CD8-positive, alpha-beta T cell (primary cell): ENCODE measurements at regions of chr17 and their contacts with region 1.

Region 1: GRCh38 chr17:385926-386876 is 33.6 kb upstream of the RPH3AL start:
- DNase-seq: peak; percentile 47 to 83 (median 72)
- ATAC-seq: peak; percentile 75
- H3K4me3 ChIP-seq: no peak overlapping the region
- H3K4me3 Mint-ChIP-seq: peak overlapping the region; percentile 84
- H3K27ac ChIP-seq: no peak overlapping the region
- H3K27ac Mint-ChIP-seq: no peak overlapping the region
- H3K4me1 ChIP-seq: peaks cover 5% of the 10 kb centered on the region
- H3K4me1 Mint-ChIP-seq: peaks cover 18% of the 10 kb centered on the region
- H3K27me3 ChIP-seq: no peaks in the 10 kb centered on the region
- H3K27me3 Mint-ChIP-seq: peaks cover 16% of the 10 kb centered on the region
- CTCF ChIP-seq: peak; percentile 49

Region 2: GRCh38 chr17:143782-144281 is 242.4 kb before region 1 on chr17:
- CTCF ChIA-PET with region 1: interaction called, 15 read pairs
- POLR2A ChIA-PET with region 1: interaction called, 3 read pairs
- intact Hi-C with region 1: loop called in 1 of 2 experiments (anchors 2 kb)
- DNase-seq: peak; percentile 69 to 92 (median 83)
- ATAC-seq: peak; percentile 99
- H3K4me3 ChIP-seq: no peak overlapping the region
- H3K4me3 Mint-ChIP-seq: no peak overlapping the region
- H3K27ac ChIP-seq: no peak overlapping the region
- H3K27ac Mint-ChIP-seq: no peak overlapping the region
- H3K4me1 ChIP-seq: peaks cover 3% of the 10 kb centered on the region
- H3K4me1 Mint-ChIP-seq: peaks cover 2% of the 10 kb centered on the region
- H3K27me3 ChIP-seq: no peaks in the 10 kb centered on the region
- H3K27me3 Mint-ChIP-seq: peaks cover 6% of the 10 kb centered on the region
- CTCF ChIP-seq: peak; percentile 94

Region 3: DNA sequence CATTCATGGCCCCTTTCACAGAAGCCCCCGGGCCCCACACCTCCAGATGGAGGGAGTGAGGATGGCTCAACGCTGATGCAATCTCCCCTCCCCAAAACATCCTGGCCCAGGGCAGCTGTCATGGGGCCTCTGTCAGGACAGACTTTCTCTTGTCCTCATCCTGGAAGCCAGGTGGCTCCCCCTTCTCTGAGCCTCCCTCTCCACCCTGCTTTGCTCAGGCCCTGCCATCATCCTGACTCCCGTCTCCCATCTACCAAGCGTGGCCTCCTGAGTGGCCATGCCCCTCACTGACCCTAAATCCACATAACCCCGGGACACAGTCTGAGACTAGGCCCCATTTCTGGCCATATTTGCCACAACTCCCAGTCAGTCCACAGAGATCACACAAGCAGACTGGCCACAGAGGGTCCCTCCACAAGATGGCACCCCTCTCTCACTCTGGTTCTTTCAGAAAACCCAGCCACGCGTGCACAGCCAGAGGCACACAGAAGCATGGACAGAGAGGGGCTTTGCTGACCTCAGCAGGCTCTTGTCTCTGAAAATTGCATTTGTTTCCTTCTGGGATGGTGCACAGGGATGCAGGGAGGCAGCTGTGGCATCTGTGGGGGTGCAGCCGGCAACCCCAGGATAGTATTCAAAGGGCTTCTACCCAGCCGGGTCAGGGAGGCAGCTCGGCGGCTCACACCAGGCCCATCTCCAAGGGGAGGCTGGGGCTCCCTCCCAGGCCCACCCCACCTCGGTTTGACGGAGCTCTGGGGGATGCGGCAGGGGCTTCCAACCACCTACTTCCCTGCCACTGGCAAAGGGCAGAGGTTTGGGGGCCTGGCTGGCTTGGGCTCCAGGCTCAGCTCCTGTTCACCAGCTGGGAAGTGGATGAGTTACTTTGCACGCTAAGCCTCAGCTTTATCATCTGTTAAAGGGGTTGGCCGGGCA is 221.6 kb before region 1 on chr17:
- CTCF ChIA-PET with region 1: interaction called, 6 read pairs
- POLR2A ChIA-PET with region 1: no interaction called
- intact Hi-C with region 1: loop called in 1 of 2 experiments (anchors 2 kb)
- DNase-seq: peak in 5 of 9 experiments; percentile 9 to 57 (median 30)
- ATAC-seq: peak; percentile 34
- H3K4me3 ChIP-seq: no peak overlapping the region
- H3K4me3 Mint-ChIP-seq: no peak overlapping the region
- H3K27ac ChIP-seq: no peak overlapping the region
- H3K27ac Mint-ChIP-seq: peak overlapping the region; percentile 11
- H3K4me1 ChIP-seq: no peaks in the 10 kb centered on the region
- H3K4me1 Mint-ChIP-seq: no peaks in the 10 kb centered on the region
- H3K27me3 ChIP-seq: peaks cover 0 to 2% of the 10 kb centered on the region in 2 experiments
- H3K27me3 Mint-ChIP-seq: peaks cover 4% of the 10 kb centered on the region
- CTCF ChIP-seq: no peak